ENCODE measurements at regions of chr3 and their contacts with region 1.

Region 1: GRCh38 chr3:195259475-195260279 is 11.3 kb downstream of the XXYLT1 start:
- DNase-seq: peak; percentile 92
- ATAC-seq: peak; percentile 87
- H3K4me3 ChIP-seq: peak overlapping the region; percentile 56 to 77 (median 56); a peak in 5 of 6 replicates
- H3K27ac ChIP-seq: peak overlapping the region; percentile 92
- H3K4me1 ChIP-seq: peaks cover 38% of the 10 kb centered on the region
- H3K27me3 ChIP-seq: no peaks in the 10 kb centered on the region
- CTCF ChIP-seq: peak; percentile 51; the same call in 1 of the 2 replicates
- EP300 ChIP-seq: peak in 1 of 2 experiments; percentile 67; a peak in 1 of 4 replicates
- POLR2A ChIP-seq: peak in 1 of 2 experiments; percentile 62; a peak in 1 of 4 replicates
- RAD21 ChIP-seq: peak; percentile 99

Region 2: DNA sequence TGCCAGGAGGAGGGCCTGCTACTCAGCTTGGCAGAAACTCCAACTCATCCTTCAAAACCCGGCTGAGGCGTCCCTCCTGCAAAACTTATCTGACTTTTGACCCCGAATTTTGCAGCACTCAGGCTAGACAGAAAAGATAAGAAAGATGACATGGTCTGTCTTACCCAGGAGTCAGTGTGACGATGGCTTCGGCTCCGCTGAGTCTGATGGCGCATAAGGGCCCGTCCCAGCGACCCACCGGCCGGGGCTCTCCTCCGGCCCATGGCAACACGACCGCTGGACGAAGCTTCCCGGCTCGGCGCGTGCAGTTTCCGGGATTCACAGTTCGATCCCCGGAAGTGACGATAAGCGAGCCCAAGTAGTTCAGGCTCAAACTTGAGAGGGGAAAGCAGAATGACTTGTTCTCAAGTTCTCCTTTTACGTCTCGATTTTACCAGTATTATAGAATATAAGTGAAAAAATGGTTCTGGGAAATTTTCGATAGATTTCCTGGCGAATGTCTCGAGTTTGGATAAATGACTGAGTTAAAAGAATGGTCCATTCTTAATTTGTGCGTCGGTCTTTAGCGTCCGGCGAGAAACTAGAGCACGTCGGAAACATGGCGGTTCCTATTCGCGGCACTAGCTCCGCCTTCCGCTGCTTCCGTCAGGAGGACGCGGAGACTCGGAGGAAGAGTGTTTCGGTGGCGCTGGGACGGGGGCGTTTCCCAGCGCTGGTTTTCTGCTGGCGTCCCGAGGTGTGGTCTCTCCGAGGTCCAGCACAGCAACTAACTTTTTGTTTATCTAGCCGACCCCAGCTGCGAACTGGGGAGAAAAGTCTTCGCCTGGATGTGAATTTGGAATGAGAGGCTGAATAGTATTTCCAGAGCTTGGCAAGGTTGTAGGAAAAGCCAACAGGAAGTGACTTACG is 587.5 kb before region 1 on chr3 and contains the start of gene LSG1:
- CTCF ChIA-PET with region 1: interaction called, 16 read pairs
- POLR2A ChIA-PET with region 1: interaction called, 9 read pairs
- in situ Hi-C with region 1: loop called (anchors 5 kb)
- intact Hi-C with region 1: loop called (anchors 2 kb)
- DNase-seq: peak; percentile 90
- ATAC-seq: peak; percentile 93
- H3K4me3 ChIP-seq: peak within 1 kb of the TSS; percentile 79 to 85 (median 84)
- H3K27ac ChIP-seq: peak within 1 kb of the TSS; percentile 81
- H3K4me1 ChIP-seq: peaks cover 43% of the 10 kb centered on the region
- H3K27me3 ChIP-seq: peaks cover 0 to 3% of the 10 kb centered on the region in 2 experiments; a peak in 1 of 5 replicates
- CTCF ChIP-seq: peak; percentile 35; the same call in 1 of the 2 replicates
- EP300 ChIP-seq: no peak; a peak in 1 of 4 replicates
- POLR2A ChIP-seq: peak; percentile 68 to 72
- RAD21 ChIP-seq: no peak
- total RNA-seq, gene LSG1: 19.3 and 32.1 TPM in 2 replicates

Region 3: DNA sequence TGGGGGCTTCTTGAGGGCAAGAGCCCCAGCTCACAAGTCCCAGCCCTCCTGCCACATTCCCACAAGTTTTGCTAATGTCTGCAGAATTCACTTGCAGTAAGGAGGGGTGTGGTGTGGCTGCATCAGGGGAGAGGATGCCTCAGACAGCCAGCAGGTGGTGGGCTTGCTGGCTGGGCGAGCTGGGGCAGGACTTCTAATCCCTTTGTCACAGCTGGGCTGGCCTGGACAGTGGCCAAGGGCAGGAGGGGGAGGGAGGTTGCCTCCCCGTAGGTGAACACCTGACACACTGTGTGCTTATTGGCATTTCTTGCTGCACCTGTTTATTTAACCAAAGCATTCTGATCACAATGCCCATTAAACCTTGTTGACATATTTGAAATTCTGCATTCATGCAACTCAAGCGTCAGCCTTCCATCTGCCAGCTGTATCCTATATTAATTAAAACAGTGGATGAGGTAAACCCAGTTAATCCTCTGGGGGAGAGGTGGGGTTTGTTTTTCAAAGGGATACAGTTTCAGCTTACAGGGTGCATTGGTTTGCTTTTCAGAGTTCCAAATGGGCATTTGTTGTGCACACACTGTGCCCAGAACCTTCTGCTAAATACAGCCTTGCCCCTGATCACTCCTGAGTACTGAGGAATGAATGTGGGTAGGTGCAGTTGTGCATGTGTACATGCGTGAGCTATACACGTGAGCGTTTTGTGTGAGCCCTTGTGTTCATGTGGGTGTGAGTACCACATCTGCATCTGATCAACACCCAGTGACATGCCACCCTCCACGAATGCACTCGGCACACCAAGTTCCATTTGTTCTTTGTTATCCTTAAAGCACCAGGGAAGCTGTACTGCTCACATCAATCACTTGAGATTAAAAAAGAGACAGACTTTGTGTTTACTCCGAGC is 257.5 kb before region 1 on chr3:
- CTCF ChIA-PET with region 1: interaction called, 19 read pairs
- POLR2A ChIA-PET with region 1: no interaction called
- in situ Hi-C with region 1: loop called (anchors 10 kb)
- intact Hi-C with region 1: loop called (anchors 1 kb)
- DNase-seq: peak; percentile 65
- ATAC-seq: peak; percentile 96
- H3K4me3 ChIP-seq: no peak overlapping the region
- H3K27ac ChIP-seq: no peak overlapping the region
- H3K4me1 ChIP-seq: peaks cover 20% of the 10 kb centered on the region
- H3K27me3 ChIP-seq: peaks cover 0 to 53% of the 10 kb centered on the region in 2 experiments; a peak in 3 of 5 replicates
- CTCF ChIP-seq: peak; percentile 92
- EP300 ChIP-seq: no peak
- POLR2A ChIP-seq: no peak
- RAD21 ChIP-seq: peak; percentile 86

Region 4: GRCh38 chr3:195117978-195118581 is 141.6 kb before region 1 on chr3:
- CTCF ChIA-PET with region 1: no interaction called
- POLR2A ChIA-PET with region 1: no interaction called
- in situ Hi-C with region 1: no loop called
- intact Hi-C with region 1: loop called (anchors 2 kb)
- DNase-seq: no peak
- ATAC-seq: peak; percentile 10; the same call in 1 of the 3 replicates
- H3K4me3 ChIP-seq: no peak overlapping the region
- H3K27ac ChIP-seq: peak overlapping the region; percentile 19
- H3K4me1 ChIP-seq: peaks cover 56% of the 10 kb centered on the region
- H3K27me3 ChIP-seq: no peaks in the 10 kb centered on the region
- CTCF ChIP-seq: no peak
- EP300 ChIP-seq: no peak
- POLR2A ChIP-seq: no peak
- RAD21 ChIP-seq: no peak

Region 5: GRCh38 chr3:195160257-195160898 is 99.3 kb before region 1 on chr3:
- CTCF ChIA-PET with region 1: interaction called, 3 read pairs
- POLR2A ChIA-PET with region 1: interaction called, 8 read pairs
- in situ Hi-C with region 1: no loop called
- intact Hi-C with region 1: loop called (anchors 2 kb)
- DNase-seq: peak; percentile 95
- ATAC-seq: peak; percentile 65
- H3K4me3 ChIP-seq: peak overlapping the region in 1 of 3 experiments; percentile 3; a peak in 1 of 6 replicates
- H3K27ac ChIP-seq: peak overlapping the region; percentile 100
- H3K4me1 ChIP-seq: peaks cover 100% of the 10 kb centered on the region
- H3K27me3 ChIP-seq: no peaks in the 10 kb centered on the region
- CTCF ChIP-seq: no peak
- EP300 ChIP-seq: peak in 1 of 2 experiments; percentile 76; a peak in 2 of 4 replicates
- POLR2A ChIP-seq: peak in 1 of 2 experiments; percentile 18; a peak in 1 of 4 replicates
- RAD21 ChIP-seq: no peak

Region 6: GRCh38 chr3:195312714-195313113 is 53.0 kb after region 1 on chr3:
- CTCF ChIA-PET with region 1: no interaction called
- POLR2A ChIA-PET with region 1: no interaction called
- in situ Hi-C with region 1: no loop called
- intact Hi-C with region 1: no loop called
- DNase-seq: no peak
- ATAC-seq: no peak
- H3K4me3 ChIP-seq: no peak overlapping the region
- H3K27ac ChIP-seq: no peak overlapping the region
- H3K4me1 ChIP-seq: no peaks in the 10 kb centered on the region
- H3K27me3 ChIP-seq: no peaks in the 10 kb centered on the region
- CTCF ChIP-seq: no peak
- EP300 ChIP-seq: no peak
- POLR2A ChIP-seq: no peak
- RAD21 ChIP-seq: no peak